ENCODE measurements at regions of chr11 and their contacts with region 1.

Region 1: DNA sequence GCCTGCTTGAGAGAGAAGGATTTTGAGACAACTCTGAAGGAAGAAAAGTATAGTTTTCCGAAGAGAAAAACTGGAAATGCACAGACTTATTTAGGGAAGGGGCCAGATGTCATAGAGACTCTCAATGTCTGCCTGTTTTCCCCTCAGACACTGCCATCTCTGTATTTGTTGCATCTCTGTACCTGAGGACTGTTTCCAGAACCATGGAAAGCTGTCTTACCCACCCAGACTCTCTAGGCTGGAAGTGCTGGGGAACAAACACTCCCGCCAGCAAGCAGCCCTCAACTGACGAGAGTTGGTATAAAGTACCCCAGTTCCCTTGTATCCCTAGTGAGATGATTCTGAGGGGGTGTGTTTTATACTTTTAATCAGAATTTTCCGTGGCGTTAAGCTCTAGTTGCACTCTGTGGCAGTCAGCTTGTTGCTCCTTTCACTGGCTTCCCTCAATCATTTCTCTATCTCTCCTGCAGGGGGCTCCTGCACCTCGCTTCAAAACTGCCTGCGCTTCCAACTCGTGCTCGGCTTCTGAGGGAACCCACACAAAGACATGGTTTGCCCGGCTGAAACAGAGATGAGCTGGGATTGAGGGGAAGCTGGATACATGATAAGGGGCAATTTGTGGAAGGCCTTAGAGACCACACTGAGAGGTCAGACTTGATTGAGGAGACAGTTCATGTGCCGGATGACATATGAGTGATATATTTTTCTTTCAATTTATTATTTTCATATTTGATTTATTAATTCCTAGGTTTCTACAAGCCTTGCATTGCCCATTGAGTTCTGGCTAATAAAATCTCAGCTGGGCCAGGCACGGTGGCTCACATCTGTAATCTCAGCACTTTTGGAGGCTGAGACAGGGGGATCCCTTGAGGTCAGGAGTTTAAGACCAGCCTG is 36.9 kb upstream of the CLPB start:
- DNase-seq: peak; percentile 69
- ATAC-seq: peak; percentile 98
- H3K4me3 Mint-ChIP-seq: no peak overlapping the region
- H3K27ac Mint-ChIP-seq: no peak overlapping the region
- H3K4me1 Mint-ChIP-seq: peaks cover 2% of the 10 kb centered on the region
- H3K27me3 Mint-ChIP-seq: peaks cover 48% of the 10 kb centered on the region

Region 2: DNA sequence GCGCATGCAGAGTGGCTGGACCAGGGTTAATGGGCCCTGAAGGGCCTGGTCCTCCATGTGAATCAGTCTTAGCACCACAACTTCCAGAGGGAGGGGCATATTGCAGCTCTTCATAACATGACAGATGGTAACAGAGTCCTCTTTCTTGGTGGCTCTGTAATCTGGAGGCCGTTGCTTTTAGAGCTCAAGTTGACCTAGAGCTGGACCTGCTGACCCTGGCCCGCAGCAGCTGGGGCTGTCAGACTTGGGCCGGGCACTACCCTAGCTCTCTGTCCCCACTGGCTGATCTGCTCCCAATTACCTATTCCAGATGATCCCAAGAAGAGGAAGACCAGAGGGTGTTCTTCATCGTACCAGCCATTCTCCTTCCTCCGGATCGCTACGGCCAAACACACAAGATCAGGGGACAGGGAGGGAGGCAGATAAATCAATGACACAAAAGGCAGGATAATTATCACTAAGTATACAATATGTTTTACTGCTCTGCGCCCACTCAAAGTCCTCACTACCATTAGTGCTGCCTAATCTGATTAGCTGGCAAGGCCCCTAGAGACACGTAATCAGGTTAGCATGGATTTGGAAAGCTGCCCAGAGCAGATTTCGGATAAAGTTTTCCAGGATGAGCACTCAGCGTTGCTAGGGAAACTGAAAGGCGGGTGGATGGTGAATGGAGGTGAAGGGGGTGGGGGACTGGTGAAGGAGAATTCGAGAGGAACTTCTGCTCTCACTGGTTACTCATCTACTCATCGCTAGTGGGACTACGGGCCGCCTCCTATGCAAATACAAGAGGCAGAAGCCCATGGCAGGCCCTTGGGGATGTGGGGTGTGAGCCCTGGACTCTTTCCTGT is 162.8 kb before region 1 on chr11:
- CTCF ChIA-PET with region 1: no interaction called
- POLR2A ChIA-PET with region 1: no interaction called
- DNase-seq: no peak
- ATAC-seq: no peak
- H3K4me3 Mint-ChIP-seq: no peak overlapping the region
- H3K27ac Mint-ChIP-seq: no peak overlapping the region
- H3K4me1 Mint-ChIP-seq: no peaks in the 10 kb centered on the region
- H3K27me3 Mint-ChIP-seq: no peaks in the 10 kb centered on the region

Region 3: GRCh38 chr11:72446902-72447769 is 24.1 kb before region 1 on chr11:
- CTCF ChIA-PET with region 1: interaction called, 34 read pairs
- POLR2A ChIA-PET with region 1: no interaction called
- DNase-seq: peak; percentile 38
- ATAC-seq: peak; percentile 67
- H3K4me3 Mint-ChIP-seq: no peak overlapping the region
- H3K27ac Mint-ChIP-seq: no peak overlapping the region
- H3K4me1 Mint-ChIP-seq: no peaks in the 10 kb centered on the region
- H3K27me3 Mint-ChIP-seq: peaks cover 30% of the 10 kb centered on the region

Region 4: DNA sequence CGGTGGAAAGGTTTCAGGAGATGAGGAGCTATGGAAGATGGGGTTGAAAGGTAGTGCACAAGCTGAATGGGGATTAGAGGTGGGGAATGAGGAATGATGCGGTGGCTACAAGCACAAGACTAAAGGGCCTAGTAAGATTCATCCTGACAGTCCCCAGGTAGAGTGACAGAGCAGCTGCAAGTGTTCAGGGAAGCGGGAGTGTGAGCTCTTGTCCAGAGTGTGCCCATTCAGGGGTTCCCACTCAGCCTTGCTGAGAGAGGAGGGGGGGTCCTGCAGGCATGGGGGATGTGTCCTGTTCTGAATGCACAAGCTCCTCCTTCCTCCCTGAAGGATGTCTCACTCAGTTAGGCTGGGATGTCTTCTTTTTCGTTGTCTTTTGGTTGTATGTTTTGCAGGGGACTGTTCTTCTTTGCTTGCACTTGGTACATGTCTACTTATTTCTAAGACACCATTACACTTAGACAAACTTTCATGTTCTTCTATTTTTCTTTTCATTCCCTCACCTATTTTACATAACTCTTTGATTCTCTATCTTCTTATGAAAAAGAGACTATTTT is 11.1 kb before region 1 on chr11:
- CTCF ChIA-PET with region 1: interaction called, 34 read pairs
- POLR2A ChIA-PET with region 1: interaction called, 3 read pairs
- DNase-seq: no peak
- ATAC-seq: no peak
- H3K4me3 Mint-ChIP-seq: no peak overlapping the region
- H3K27ac Mint-ChIP-seq: no peak overlapping the region
- H3K4me1 Mint-ChIP-seq: no peaks in the 10 kb centered on the region
- H3K27me3 Mint-ChIP-seq: peaks cover 40% of the 10 kb centered on the region

Region 5: DNA sequence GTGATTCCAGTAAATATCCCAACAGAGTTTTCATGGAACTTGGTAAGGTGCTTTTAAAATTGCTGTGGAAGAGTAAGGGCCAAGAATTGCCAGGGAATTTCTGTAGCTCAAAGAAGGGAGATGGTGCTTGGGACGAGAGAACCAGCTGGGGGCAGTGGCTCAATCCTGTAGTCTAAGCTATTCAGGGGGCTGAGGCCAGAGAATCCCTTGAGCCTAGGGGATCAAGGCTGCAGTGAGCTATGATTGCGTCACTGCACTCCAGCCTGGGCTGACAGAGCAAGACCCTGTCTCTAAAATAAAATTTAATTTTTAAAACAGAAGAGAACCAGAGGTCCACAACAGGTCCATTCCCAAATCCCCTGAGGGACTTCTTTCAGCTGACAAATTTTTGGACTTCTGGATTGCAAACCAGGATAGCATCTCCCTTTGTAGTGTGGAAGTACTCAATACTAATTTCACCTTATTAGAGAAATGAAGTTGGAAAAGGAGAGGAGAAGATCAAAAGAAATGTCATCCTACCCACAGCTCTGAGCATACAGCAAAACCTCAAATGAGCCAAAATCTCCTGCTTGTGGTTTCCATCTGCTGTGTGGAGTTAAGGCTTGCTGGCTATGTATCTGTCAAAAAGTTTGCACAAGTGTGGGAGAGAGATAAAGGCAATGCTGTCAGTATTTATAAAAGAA is 22.3 kb after region 1 on chr11:
- CTCF ChIA-PET with region 1: interaction called, 10 read pairs
- POLR2A ChIA-PET with region 1: no interaction called
- DNase-seq: no peak
- ATAC-seq: no peak
- H3K4me3 Mint-ChIP-seq: no peak overlapping the region
- H3K27ac Mint-ChIP-seq: no peak overlapping the region
- H3K4me1 Mint-ChIP-seq: peaks cover 10% of the 10 kb centered on the region
- H3K27me3 Mint-ChIP-seq: peaks cover 7% of the 10 kb centered on the region

Region 6: DNA sequence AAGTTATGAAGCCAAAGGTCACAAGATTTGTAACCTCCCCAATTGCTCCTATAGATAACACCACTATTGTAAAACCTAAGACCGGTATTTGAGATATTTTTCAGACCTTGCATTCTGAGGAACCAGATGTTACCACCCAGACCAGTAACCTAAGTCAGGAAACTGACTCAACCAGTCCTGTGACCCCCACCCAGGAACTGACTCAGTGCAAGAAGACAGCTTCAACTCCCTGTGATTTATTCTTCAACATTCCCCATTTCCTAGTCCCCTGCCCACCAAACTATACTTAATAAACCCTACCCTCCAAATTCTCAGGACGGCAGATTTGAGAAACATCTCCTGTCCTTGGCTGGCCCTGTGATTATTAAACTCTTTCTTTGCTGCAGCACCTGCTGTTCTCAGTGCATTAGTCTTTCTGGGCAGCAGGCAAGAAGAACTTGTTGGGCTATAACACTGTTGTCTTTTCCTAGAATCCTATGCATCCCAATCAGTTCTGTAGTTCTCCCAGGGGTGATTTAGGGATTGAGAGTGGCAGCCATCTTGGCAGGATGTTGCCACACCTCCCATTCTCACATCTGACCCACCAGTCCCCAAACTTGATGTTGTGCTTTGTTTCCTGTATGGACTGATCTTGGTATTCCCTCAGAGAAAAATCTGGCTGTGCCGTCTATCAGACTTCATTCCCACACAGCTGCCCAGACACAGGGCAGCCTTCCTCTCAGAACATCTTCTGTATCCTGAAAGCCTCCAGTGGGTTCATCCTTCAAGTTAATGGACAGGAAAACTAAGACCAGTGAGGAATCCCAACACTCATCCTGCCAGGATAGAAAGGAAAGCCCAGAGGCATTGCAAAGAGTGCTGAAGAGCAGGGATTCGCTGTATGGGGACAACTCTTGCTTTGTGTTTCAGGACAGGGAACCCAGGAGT is 99.0 kb after region 1 on chr11:
- CTCF ChIA-PET with region 1: interaction called, 10 read pairs
- POLR2A ChIA-PET with region 1: no interaction called
- DNase-seq: no peak
- ATAC-seq: no peak
- H3K4me3 Mint-ChIP-seq: no peak overlapping the region
- H3K27ac Mint-ChIP-seq: no peak overlapping the region
- H3K4me1 Mint-ChIP-seq: peaks cover 14% of the 10 kb centered on the region
- H3K27me3 Mint-ChIP-seq: peaks cover 23% of the 10 kb centered on the region

Region 7: DNA sequence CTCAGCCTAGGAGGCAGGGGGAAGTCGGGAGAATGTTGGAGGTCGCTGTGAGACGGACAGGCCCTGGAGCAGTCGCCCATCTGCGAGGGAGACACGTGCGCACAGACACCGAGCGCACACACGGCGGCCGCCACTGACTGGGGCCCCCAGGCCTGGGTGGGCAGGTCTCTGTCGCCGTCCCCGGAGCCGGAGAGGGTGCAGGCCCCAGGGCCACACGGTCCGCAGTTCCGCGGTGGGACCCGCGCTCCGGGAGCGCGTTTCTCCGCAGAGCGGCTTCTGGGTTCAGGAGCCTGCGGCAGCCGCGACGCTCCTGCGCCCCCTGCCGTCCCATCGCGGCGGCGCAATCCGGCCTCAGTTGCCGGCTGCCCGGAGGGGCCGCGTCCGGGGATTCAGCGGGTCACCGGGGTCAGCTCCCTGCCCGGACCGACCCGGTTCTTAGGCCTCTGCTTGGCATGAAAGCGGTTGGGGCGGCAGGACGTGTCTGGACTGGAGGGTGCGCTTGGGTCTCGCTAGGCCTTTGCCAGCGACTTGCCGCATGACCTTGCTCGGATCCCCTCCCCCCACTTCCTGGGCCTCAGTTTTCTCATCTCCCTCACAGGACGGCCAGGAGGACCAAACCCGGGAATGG is 171.7 kb after region 1 on chr11:
- CTCF ChIA-PET with region 1: interaction called, 18 read pairs
- POLR2A ChIA-PET with region 1: no interaction called
- DNase-seq: peak; percentile 69
- ATAC-seq: peak; percentile 85
- H3K4me3 Mint-ChIP-seq: no peak overlapping the region
- H3K27ac Mint-ChIP-seq: no peak overlapping the region
- H3K4me1 Mint-ChIP-seq: peaks cover 2% of the 10 kb centered on the region
- H3K27me3 Mint-ChIP-seq: peaks cover 9% of the 10 kb centered on the region

Region 8: DNA sequence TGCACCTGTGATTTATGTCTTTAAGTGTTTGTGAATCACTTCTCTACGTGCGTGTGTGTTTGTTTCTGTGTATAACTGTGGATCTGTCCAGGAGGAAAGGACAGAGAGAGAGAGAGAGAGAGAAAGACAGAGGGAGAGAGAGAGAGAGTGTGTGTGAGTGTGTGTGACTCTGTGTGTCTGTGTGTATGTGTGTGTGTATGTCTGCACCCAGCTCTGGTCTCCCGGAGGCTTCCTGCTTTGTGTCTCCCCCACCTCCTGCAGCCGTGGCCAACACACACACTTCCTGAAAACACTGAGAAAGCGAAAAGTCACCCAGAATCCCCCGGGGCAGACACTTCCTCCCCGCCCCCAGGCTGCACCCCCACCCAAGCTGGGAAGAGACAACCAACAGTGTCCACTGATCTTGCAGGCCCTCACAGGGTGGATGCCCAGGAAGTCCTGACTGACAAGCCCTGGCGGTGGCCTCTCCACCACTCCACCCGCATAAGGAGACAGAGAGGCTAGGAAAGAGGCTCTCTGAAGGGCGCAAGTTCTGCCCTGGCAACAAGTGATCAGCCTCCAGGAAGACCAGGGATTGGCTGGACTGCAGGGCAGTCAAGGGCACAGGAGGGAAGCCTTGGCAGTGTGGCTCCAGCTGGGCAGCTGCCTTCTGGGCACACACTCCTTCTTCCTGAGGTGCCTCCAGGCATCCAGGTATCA is 250.9 kb after region 1 on chr11:
- CTCF ChIA-PET with region 1: no interaction called
- POLR2A ChIA-PET with region 1: no interaction called
- DNase-seq: peak; percentile 91
- ATAC-seq: peak; percentile 91
- H3K4me3 Mint-ChIP-seq: peak overlapping the region; percentile 85
- H3K27ac Mint-ChIP-seq: peak overlapping the region; percentile 90
- H3K4me1 Mint-ChIP-seq: peaks cover 58% of the 10 kb centered on the region
- H3K27me3 Mint-ChIP-seq: no peaks in the 10 kb centered on the region